Activated T-helper 1 cell treated with anti-CD3 and anti-CD28 coated beads, Interleukin-12 subunit alpha, Interleukin-12 subunit beta, Interleukin-2, Interleukin-4 antibody, amounts not matched to agents 30 ng/mL and 10 ng/mL and 1 ng/mL, durations not matched to agents 14 hours and 24 hours and 36 hours (primary cell): ENCODE measurements at regions of chr6 and their contacts with region 1.

Region 1: DNA sequence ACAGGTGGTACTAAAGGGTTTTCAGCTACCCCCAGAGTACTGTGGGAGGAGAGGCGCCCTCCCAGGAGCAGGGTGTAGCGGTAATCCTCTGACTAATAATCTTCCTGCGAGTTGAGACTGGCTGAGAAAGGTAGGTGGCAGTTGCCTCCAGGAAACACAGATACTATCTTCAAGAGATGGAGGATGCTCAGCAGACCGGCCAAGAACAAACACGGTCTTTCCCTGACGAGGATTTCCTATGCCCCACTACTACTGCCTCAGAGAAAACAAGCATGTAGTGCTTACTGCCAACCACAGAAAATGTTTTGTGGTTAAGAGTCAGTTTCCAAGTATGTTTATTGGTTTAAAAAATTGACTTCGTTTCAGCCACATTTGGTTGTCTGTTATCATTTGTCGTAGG is 26.8 kb downstream of the C6orf89 start:
- DNase-seq: peak; percentile 72
- H3K4me3 Mint-ChIP-seq: peak overlapping the region; percentile 79
- H3K27ac Mint-ChIP-seq: peak overlapping the region; percentile 94
- H3K4me1 Mint-ChIP-seq: peaks cover 57% of the 10 kb centered on the region
- H3K27me3 Mint-ChIP-seq: no peaks in the 10 kb centered on the region

Region 2: GRCh38 chr6:36692220-36692619 is 220.4 kb before region 1 on chr6:
- intact Hi-C with region 1: loop called (anchors 1 kb)
- DNase-seq: peak; percentile 48
- H3K4me3 Mint-ChIP-seq: no peak overlapping the region
- H3K27ac Mint-ChIP-seq: peak overlapping the region; percentile 66
- H3K4me1 Mint-ChIP-seq: peaks cover 66% of the 10 kb centered on the region
- H3K27me3 Mint-ChIP-seq: no peaks in the 10 kb centered on the region

Region 3: DNA sequence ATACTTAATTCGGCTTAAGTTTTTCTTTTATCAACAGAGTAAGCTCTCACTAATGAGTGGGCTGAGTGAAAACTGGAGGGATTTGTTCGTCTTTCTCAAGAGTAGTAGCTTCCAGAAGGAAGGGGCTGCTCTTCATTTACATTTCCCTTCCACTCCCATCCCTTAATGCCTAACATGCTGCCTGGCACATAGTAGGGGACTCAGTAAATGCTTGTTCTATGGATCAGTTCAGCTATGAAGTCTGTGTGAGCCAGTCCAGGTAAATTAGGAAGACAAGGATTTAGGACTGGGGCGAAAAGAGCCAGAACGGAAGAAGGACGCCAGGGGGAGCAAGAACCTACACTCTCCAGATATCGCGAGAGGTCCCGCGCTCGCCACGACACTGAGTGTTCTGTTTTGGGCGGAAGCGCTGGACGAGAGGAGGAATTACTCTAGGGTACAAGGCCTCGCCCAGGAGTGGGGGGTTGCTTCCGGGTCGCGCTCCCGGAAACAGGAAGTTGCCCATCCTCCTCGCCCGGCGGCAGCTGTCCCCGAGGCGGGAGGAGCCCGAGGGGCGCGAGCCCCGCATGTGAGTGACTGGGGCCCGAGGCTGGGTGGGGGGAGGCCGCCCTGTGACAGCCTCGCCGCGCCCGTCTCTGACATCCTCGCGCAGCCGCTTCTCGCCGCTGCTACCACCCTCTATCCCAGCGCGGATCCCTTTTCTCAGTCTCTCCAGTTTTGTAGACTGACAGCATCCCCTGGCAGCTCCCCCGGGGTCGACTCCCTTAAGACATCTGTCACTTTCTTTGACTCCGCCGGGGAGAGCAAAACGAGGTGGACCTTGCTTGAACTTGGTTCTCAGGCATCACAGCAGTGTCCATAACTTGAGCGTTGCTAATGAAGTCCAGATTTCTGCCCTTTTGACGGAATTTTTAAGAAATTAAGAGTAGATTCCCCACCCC is 26.9 kb before region 1 on chr6 and contains the start of gene C6orf89:
- intact Hi-C with region 1: loop called (anchors 1 kb)
- DNase-seq: peak; percentile 94
- H3K4me3 Mint-ChIP-seq: peak within 1 kb of the TSS; percentile 91
- H3K27ac Mint-ChIP-seq: peak within 1 kb of the TSS; percentile 82
- H3K4me1 Mint-ChIP-seq: peaks cover 37% of the 10 kb centered on the region
- H3K27me3 Mint-ChIP-seq: no peaks in the 10 kb centered on the region
- total RNA-seq, gene C6orf89: 31.5 and 31.8 TPM in 2 replicates

Region 4: GRCh38 chr6:36985808-36986703 is 73.5 kb after region 1 on chr6 and contains the start of gene MTCH1:
- intact Hi-C with region 1: loop called (anchors 1 kb)
- DNase-seq: peak; percentile 87
- H3K4me3 Mint-ChIP-seq: peak within 1 kb of the TSS; percentile 99
- H3K27ac Mint-ChIP-seq: peak within 1 kb of the TSS; percentile 99
- H3K4me1 Mint-ChIP-seq: peaks cover 27% of the 10 kb centered on the region
- H3K27me3 Mint-ChIP-seq: peaks cover 10% of the 10 kb centered on the region
- total RNA-seq, gene MTCH1: 120 and 127 TPM in 2 replicates

Region 5: DNA sequence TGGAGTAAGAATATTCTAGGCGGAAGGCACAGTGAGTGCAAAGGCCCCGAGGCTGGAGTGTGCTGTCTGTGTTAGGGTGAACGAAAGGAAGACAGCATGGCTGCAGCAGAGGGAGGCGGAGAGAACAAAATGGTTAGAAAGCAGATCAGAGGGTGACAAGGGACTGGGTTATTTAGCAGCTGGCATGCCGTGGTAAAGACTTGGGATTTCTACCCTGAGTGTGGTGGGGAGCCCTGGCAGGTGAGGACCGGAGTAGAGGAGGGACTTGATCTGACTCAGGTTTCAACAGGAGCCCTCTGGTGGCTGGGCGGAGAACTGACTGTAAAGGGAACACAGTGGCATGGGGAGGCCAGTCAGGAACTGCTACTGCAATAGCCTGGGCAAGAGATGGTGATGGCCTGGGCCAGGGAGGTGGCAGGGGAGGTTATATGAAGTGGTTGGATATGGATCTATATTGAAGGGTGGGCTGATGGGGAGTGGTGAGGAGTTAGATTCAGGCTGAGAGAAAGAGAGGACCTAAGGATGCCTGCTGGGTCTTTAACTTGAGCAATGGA is 295.4 kb after region 1 on chr6:
- intact Hi-C with region 1: loop called (anchors 1 kb)
- DNase-seq: peak; percentile 83
- H3K4me3 Mint-ChIP-seq: peak overlapping the region; percentile 37
- H3K27ac Mint-ChIP-seq: peak overlapping the region; percentile 86
- H3K4me1 Mint-ChIP-seq: peaks cover 61% of the 10 kb centered on the region
- H3K27me3 Mint-ChIP-seq: no peaks in the 10 kb centered on the region

Region 6: DNA sequence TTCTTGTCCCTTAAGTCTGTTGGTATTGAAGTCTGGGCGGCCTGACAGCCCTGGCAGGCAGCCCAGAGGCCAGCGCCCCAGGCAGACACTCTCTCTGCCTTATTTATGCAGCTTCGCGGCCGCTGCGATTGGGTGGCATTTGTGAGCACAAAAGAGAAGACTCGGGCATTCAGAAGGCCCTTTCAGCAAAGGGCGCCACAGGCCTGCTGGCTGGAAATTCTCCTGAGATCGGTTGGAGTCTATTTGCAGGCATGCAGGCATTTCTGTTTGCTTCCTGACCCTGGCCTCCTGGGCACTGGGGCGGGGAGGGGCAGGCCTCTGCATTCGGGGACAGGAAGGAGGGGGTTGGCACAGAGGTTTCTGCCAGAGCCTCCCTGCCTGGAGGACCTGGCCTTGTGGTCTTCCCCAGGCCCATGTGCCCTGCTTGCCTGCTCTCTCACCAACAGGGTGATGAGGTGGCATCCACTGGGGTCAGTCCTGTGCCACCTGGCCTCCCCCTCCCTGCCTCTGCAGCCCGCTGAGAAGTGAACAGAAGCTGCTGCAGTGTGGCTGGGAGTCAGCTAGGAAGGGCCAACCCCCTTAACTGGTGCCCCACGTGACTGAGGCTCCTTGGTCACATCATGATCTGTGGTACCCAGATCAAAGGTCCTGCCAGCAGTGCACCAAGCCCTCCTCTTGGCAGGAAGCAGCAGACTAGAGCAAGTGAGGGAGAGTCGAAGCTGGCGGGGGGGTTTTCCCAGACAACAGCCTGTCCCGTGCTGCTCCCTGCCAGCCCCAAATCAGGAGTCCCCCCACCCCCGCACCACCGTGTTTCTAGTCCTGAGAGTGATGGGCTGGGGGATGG is 603.7 kb after region 1 on chr6:
- intact Hi-C with region 1: loop called (anchors 2 kb)
- DNase-seq: peak; percentile 81
- H3K4me3 Mint-ChIP-seq: peak overlapping the region; percentile 75
- H3K27ac Mint-ChIP-seq: peak overlapping the region; percentile 92
- H3K4me1 Mint-ChIP-seq: peaks cover 57% of the 10 kb centered on the region
- H3K27me3 Mint-ChIP-seq: peaks cover 9% of the 10 kb centered on the region